Right cardiac atrium (tissue), 5 donors: ENCODE measurements at regions of chr15 and their contacts with region 1.

Region 1: DNA sequence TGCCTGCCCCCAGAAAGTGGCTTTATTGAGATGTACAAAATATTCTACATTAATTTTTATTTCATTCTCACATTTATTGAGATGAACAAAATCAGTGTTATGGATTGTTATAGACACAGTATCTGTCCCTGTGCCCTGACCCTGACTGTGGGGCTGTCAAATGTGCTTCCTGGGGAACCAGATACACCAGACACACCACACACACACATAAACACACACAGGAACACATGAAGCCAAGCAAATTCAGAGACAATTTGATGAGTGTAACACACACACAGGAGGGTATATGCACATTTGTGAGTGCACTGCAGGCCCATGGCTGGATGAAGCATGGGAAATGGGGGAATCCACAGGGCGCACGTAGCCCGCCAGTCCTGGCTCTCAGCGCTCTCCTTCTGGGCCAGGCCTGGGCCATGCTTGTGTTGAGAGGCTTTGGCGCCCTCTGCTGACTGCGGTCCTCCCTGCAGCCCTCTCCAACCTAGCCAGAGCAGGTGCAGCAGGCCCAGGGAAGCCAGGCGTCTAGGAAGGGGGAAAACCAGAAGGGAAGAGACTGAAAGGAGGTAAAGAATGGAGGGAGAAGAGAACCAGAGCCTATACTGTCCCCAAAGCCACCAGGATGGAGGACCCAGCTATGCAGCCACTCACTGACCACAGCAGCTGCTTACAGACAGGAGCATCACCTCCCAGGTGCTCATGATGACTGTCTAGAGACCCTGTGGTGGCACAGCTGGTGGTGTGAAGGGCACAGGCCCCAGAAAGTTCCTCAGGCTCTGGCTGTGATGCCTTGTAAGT is 18.0 kb upstream of the LOXL1 start:
- DNase-seq: peak; percentile 80 to 96 (median 93)
- ATAC-seq: peak; percentile 94 to 96
- H3K4me3 ChIP-seq: no peak overlapping the region
- H3K27ac ChIP-seq: no peak overlapping the region
- H3K4me1 ChIP-seq: no peaks in the 10 kb centered on the region
- H3K27me3 ChIP-seq: no peaks in the 10 kb centered on the region

Region 2: DNA sequence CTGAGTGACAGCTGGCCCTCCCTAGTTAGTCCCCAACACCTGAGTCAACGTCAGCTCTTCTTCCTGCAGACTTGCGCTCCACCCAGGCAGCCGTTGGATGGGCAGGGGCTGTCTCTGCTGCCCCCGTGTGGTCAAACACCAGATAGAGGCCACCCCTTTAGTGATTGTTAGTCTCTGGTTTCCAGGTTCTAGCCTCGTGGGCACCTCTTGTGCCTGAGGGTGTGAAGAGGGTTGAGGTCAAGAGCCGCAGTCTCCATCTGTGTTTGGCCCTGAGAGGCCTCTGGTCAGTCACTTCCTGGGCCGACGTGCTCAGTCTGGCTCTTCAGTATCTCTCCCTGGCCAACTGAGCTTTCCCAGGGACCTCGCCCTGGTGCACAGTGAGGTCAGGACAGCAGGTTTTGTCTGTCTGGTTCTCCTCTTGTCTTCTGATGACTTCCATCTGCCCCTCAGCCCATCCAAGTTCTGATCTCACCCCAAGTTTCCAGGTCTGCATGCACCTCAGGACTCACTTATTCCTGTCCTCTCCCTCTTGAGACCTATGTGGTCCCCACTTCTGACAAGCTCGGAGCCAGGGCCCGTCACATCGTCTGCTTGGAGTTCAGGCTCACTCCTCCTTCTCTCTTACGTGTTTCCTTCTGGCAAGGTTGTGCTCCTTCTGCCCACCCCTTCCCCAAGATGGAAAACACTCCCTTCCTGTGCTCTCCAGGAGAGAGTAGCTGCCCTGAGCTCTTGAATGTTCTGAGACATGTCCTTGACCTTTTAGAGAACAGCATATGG is 203.2 kb before region 1 on chr15:
- intact Hi-C with region 1: loop called in 2 of 4 experiments (anchors 5 to 10 kb)
- DNase-seq: peak; percentile 63 to 87 (median 79)
- ATAC-seq: peak; percentile 52 to 57
- H3K4me3 ChIP-seq: no peak overlapping the region
- H3K27ac ChIP-seq: no peak overlapping the region
- H3K4me1 ChIP-seq: no peaks in the 10 kb centered on the region
- H3K27me3 ChIP-seq: no peaks in the 10 kb centered on the region

Region 3: DNA sequence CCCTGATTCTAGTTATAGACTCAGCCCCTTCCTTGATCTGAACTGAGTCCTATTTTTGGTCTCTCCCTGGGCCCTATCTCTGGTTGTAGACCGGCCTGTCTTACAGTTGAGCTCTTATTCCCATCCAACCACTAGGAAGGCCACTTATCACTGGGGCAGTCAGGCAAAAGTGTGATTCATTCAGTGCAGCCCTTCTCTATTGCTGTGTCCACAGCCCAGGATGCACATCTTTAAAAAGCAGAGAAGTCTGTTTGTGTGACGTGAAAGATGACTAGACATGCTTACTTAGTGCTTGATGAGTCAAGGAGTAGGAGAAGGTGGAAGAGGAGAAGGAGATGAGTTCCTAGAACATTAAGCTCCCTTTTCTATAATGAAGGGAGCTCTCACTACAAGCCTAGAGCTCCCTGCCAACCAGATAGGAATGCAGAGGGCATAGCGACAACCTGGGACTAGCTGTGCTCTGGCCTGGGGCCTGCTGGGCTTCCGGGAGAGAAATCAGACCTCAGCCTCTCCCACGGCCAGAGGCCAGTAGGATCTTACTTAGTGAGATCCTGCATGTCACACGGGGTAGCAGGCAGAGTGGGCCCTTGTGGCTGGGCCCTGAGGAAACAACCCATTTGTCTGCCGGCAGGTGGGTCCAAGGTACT is 180.8 kb before region 1 on chr15:
- intact Hi-C with region 1: loop called in 1 of 4 experiments (anchors 10 kb)
- DNase-seq: peak in 1 of 3 donors; percentile 61
- ATAC-seq: peak; percentile 53 to 65
- H3K4me3 ChIP-seq: no peak overlapping the region
- H3K27ac ChIP-seq: peak overlapping the region; percentile 89
- H3K4me1 ChIP-seq: peaks cover 3% of the 10 kb centered on the region
- H3K27me3 ChIP-seq: no peaks in the 10 kb centered on the region

Region 4: DNA sequence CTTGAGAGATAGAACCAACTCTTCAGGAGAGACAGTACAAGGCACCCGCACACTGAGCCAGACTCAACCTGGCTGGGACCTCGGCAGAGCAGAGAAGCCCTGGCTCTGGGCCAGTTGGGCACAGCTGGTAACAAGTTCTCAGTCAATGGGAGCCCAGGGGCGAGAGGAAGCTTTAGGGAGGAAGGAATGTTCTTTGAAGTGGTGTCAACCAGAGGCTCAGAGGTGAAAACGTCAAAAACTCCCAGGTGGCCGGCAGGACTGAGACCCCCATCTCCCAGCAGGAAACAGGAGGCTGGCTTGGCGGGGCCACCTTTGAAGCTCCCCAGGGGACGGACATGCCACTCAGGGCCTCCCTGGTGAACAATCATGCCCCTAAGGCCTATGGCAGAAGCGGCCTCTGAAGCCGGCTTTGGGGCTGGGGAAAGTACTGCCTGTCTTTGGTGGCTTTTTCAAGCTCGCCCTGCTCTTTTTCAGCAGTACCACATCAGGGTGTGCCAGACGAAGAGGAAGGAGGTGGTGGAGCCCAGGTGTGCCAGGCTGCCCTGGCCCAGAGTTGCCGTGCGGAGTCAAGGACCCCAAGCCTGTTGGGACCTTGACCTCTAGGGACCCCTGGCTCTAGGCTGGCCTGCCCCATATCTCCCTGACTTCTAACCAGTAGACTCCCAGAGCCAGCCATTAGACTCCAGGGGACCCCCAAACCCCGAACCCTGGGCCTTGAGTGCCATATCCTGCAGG is 51.6 kb before region 1 on chr15:
- intact Hi-C with region 1: no loop called
- DNase-seq: peak; percentile 27 to 65 (median 65)
- ATAC-seq: peak; percentile 38 to 42
- H3K4me3 ChIP-seq: no peak overlapping the region
- H3K27ac ChIP-seq: no peak overlapping the region
- H3K4me1 ChIP-seq: peaks cover 5% of the 10 kb centered on the region
- H3K27me3 ChIP-seq: no peaks in the 10 kb centered on the region

Region 5: DNA sequence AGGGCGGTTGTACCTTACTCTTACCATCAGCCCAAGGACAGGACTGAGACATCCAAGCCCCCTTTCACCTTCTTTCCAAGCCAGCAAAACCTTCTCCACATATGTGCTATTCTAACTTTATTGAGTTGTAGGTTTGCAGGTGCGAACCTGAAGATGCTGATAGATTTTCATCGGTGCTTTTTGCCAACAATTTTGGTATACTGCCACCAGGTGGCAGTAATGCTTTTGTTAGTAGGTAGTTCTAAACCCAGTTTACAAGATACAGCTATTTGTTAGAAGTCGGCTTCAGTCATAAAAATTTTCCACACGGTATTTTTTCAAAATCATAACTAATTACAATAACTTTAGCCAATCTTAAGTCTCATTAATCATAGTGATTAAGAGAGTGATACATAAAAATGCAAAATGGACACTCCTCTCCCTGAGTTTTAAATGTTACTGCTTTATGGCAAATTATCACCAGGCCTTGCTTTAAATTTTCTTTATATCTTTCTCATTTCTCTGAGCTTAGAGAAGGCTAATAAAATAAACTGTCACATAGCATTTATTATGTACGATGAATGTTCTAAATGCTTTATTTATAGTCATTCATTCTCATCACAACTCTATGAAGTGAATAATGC is 34.2 kb before region 1 on chr15:
- intact Hi-C with region 1: loop called in 1 of 4 experiments (anchors 5 kb)
- DNase-seq: no peak
- ATAC-seq: no peak
- H3K4me3 ChIP-seq: no peak overlapping the region
- H3K27ac ChIP-seq: no peak overlapping the region
- H3K4me1 ChIP-seq: peaks cover 11% of the 10 kb centered on the region
- H3K27me3 ChIP-seq: no peaks in the 10 kb centered on the region